Common myeloid progenitor, CD34-positive (primary cell): ENCODE measurements at regions of chr1 and their contacts with region 1.

Region 1: GRCh38 chr1:23530747-23531561 is at the start of gene E2F2:
- DNase-seq: peak; percentile 81 to 90 (median 87)
- H3K4me3 ChIP-seq: peak within 1 kb of the TSS; percentile 53 to 78 (median 72)
- H3K27ac ChIP-seq: no peak within 1 kb of the TSS
- H3K4me1 ChIP-seq: peaks cover 37 to 80% (median 72%) of the 10 kb centered on the region in 4 experiments
- H3K27me3 ChIP-seq: no peaks in the 10 kb centered on the region

Region 2: GRCh38 chr1:23330846-23331245 is 200.1 kb before region 1 on chr1:
- CTCF ChIA-PET with region 1: no interaction called
- POLR2A ChIA-PET with region 1: no interaction called
- DNase-seq: no peak
- H3K4me3 ChIP-seq: no peak overlapping the region
- H3K27ac ChIP-seq: no peak overlapping the region
- H3K4me1 ChIP-seq: no peaks in the 10 kb centered on the region
- H3K27me3 ChIP-seq: no peaks in the 10 kb centered on the region

Region 3: GRCh38 chr1:23507507-23507906 is 23.4 kb before region 1 on chr1:
- CTCF ChIA-PET with region 1: interaction called, 183 read pairs
- POLR2A ChIA-PET with region 1: no interaction called
- DNase-seq: no peak
- H3K4me3 ChIP-seq: no peak overlapping the region
- H3K27ac ChIP-seq: no peak overlapping the region
- H3K4me1 ChIP-seq: no peaks in the 10 kb centered on the region
- H3K27me3 ChIP-seq: no peaks in the 10 kb centered on the region

Region 4: DNA sequence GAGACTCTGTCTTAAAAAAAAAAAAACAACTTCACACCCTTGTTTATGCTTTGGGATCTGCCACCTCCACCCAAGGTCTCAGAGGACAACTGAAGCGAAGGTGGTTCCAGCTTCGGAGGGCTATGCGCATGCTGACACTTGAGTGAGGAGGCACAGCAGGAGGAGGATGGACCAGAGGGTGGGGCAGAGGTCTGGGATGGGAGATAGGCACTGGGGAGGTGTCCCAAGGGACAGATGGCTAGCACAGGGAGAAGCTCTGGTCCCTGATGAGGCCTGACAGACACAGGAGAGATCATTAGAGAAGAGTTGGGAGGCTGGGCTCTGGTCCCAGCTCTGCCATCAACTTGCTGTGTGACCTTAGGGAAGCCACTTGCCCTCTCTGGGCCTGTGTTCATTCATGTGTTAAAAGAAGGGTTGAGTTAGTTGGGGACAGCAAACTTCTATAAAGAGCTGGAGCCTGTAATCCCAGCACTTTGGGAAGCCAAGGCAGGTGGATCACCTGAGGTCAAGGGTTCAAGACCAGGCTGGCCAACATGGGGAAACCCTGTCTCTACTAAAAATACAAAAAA is 16.8 kb before region 1 on chr1:
- CTCF ChIA-PET with region 1: interaction called, 17 read pairs
- POLR2A ChIA-PET with region 1: no interaction called
- DNase-seq: no peak
- H3K4me3 ChIP-seq: no peak overlapping the region
- H3K27ac ChIP-seq: no peak overlapping the region
- H3K4me1 ChIP-seq: no peaks in the 10 kb centered on the region
- H3K27me3 ChIP-seq: no peaks in the 10 kb centered on the region